ENCODE measurements at regions of chr10 and their contacts with region 1.

Region 1: DNA sequence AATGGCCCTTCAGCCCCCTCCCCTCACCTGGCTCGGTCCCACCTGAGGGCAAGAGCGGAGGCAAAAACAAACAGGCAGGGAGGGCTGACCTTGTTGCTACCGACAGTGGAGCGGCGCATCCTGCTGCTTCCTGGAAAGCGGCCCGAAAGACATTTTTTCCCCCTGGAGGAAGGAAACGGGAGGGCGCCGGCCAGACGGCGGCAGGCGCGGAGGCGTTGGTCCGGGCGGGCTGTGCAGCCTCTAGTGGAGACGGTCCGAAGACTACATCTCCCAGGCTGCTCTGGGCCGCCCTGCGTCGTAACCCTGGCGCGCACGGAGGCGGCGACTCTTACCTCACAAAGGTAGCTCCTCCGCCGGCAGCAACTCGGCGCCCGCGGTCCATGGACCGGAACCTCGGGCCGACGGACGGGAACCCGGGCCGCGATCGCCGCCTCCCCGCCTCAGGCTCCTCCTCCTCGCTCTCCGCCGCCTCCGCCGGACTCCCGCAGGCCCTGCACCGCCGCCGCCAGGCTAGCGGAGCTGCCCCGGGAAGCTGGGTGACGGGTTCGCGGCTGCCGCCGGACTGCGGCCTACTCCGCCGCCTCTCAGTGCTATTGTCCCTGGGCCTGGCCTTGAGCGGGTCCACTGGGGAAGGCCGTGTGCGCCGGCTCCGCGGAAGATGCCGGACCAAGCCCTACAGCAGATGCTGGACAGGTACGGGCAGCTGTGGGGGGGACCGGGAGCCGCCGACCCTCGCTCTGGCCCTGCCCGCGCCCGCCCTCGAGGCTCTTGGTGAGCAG is at the starts of genes CPEB3 and MARCHF5:
- DNase-seq: peak; percentile 96
- ATAC-seq: peak; percentile 97
- H3K4me3 ChIP-seq: peak within 1 kb of the TSS; percentile 57 to 99 (median 85)
- H3K4me3 Mint-ChIP-seq: peak within 1 kb of the TSS; percentile 95
- H3K27ac ChIP-seq: peak within 1 kb of the TSS; percentile 62 to 88
- H3K27ac Mint-ChIP-seq: peak within 1 kb of the TSS; percentile 91
- H3K4me1 ChIP-seq: peaks cover 9 to 20% of the 10 kb centered on the region in 2 donors
- H3K4me1 Mint-ChIP-seq: peaks cover 29% of the 10 kb centered on the region
- H3K27me3 ChIP-seq: no peaks in the 10 kb centered on the region
- H3K27me3 Mint-ChIP-seq: no peaks in the 10 kb centered on the region
- CTCF ChIP-seq: peak; percentile 68
- total RNA-seq, gene CPEB3: 5.0 and 6.7 TPM in 2 replicates
- total RNA-seq, gene MARCHF5: 25.9 and 27.8 TPM in 2 replicates

Region 2: GRCh38 chr10:91923371-91924211 is 367.4 kb before region 1 on chr10 and contains the start of gene BTAF1:
- CTCF ChIA-PET with region 1: interaction called, 3 read pairs
- POLR2A ChIA-PET with region 1: no interaction called
- intact Hi-C with region 1: loop called (anchors 1 kb)
- DNase-seq: peak; percentile 96
- ATAC-seq: peak; percentile 93
- H3K4me3 ChIP-seq: peak within 1 kb of the TSS; percentile 88 to 98 (median 93)
- H3K4me3 Mint-ChIP-seq: peak within 1 kb of the TSS; percentile 86
- H3K27ac ChIP-seq: peak within 1 kb of the TSS; percentile 93 to 99
- H3K27ac Mint-ChIP-seq: peak within 1 kb of the TSS; percentile 100
- H3K4me1 ChIP-seq: peaks cover 18 to 20% of the 10 kb centered on the region in 2 donors
- H3K4me1 Mint-ChIP-seq: peaks cover 39% of the 10 kb centered on the region
- H3K27me3 ChIP-seq: peaks cover 0 to 4% (median 2%) of the 10 kb centered on the region in 4 experiments
- H3K27me3 Mint-ChIP-seq: peaks cover 3% of the 10 kb centered on the region
- CTCF ChIP-seq: no peak
- total RNA-seq, gene BTAF1: 78.1 and 81.7 TPM in 2 replicates

Region 3: DNA sequence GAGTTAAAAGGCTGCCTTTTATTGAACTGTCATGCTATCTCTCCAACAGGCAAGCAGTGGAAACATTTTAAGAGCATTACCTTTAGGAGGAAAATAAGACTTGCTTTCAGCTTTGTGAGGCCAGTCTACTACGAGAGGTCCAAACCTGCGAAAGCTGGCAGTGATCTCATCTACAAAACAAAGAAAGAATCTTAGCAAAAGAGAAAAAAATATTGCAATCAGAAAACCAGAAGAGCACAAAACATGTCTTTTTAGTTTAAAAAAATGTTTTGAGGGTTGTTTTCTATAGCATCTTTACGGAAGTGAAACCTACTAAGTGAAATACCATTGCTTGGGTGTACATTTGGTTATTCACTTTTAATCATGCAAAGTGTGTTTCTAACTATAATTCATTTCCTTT is 148.1 kb before region 1 on chr10:
- CTCF ChIA-PET with region 1: interaction called, 7 read pairs
- POLR2A ChIA-PET with region 1: no interaction called
- intact Hi-C with region 1: loop called (anchors 1 kb)
- DNase-seq: peak; percentile 61
- ATAC-seq: peak; percentile 39
- H3K4me3 ChIP-seq: peak overlapping the region; percentile 6 to 51 (median 27)
- H3K4me3 Mint-ChIP-seq: peak overlapping the region; percentile 79
- H3K27ac ChIP-seq: peak overlapping the region; percentile 52 to 61
- H3K27ac Mint-ChIP-seq: peak overlapping the region; percentile 88
- H3K4me1 ChIP-seq: peaks cover 34 to 53% of the 10 kb centered on the region in 2 donors
- H3K4me1 Mint-ChIP-seq: peaks cover 59% of the 10 kb centered on the region
- H3K27me3 ChIP-seq: no peaks in the 10 kb centered on the region
- H3K27me3 Mint-ChIP-seq: no peaks in the 10 kb centered on the region
- CTCF ChIP-seq: no peak

Region 4: DNA sequence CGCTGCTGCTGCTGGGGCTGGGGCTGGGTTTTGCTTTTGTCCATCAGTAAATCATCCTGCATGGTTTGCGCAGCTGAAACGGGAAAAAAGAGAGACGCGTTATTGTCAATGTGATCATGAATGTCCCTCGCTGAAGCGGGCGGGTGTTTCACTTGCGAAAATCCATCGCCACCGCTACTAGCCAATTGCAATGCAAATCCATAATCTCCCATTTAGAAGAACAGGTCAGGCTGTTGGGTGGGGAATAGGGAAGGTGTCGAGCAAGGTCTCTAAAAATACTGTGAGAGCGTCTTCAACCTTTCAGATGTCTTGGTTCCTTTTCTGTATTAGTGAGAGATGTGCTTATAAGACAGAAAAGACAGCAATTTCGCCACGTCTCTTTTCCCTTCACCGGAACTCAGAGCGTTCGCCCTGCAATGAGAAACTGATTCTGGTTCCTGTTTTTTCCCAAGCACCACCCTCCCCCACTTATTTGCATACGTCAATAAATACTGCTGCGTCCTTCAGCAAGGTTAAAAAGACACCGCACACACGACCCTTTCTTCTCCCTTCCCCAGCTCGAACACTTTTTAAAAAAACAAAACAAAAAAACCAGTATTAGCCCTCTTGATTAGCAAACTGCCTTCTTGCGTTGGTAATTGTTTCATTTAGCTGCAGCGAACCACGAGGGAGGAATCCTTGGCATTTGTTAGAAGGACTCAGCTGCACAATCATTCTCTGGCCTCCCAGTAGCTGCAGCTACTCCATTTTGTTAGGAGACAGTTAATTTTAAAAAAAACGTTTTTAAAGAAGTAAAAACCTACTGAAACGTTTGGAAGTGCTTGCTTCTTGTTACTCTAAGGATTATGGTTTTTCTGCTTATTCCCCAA is 50.5 kb before region 1 on chr10:
- CTCF ChIA-PET with region 1: interaction called, 5 read pairs
- POLR2A ChIA-PET with region 1: interaction called, 4 read pairs
- intact Hi-C with region 1: loop called (anchors 1 kb)
- DNase-seq: peak; percentile 83
- ATAC-seq: peak; percentile 72
- H3K4me3 ChIP-seq: peak overlapping the region; percentile 63 to 99 (median 91)
- H3K4me3 Mint-ChIP-seq: peak overlapping the region; percentile 96
- H3K27ac ChIP-seq: peak overlapping the region; percentile 7 to 37
- H3K27ac Mint-ChIP-seq: peak overlapping the region; percentile 93
- H3K4me1 ChIP-seq: peaks cover 19 to 30% of the 10 kb centered on the region in 2 donors
- H3K4me1 Mint-ChIP-seq: peaks cover 47% of the 10 kb centered on the region
- H3K27me3 ChIP-seq: no peaks in the 10 kb centered on the region
- H3K27me3 Mint-ChIP-seq: no peaks in the 10 kb centered on the region
- CTCF ChIP-seq: no peak

Region 5: GRCh38 chr10:92327445-92328433 is 36.7 kb after region 1 on chr10:
- CTCF ChIA-PET with region 1: no interaction called
- POLR2A ChIA-PET with region 1: no interaction called
- intact Hi-C with region 1: no loop called
- DNase-seq: no peak
- ATAC-seq: no peak
- H3K4me3 ChIP-seq: no peak overlapping the region
- H3K4me3 Mint-ChIP-seq: no peak overlapping the region
- H3K27ac ChIP-seq: no peak overlapping the region
- H3K27ac Mint-ChIP-seq: no peak overlapping the region
- H3K4me1 ChIP-seq: no peaks in the 10 kb centered on the region
- H3K4me1 Mint-ChIP-seq: peaks cover 4% of the 10 kb centered on the region
- H3K27me3 ChIP-seq: no peaks in the 10 kb centered on the region
- H3K27me3 Mint-ChIP-seq: no peaks in the 10 kb centered on the region
- CTCF ChIP-seq: no peak

Region 6: GRCh38 chr10:93496322-93497041 is 1205.5 kb after region 1 on chr10 and contains the start of gene CEP55:
- CTCF ChIA-PET with region 1: no interaction called
- POLR2A ChIA-PET with region 1: no interaction called
- intact Hi-C with region 1: loop called (anchors 5 kb)
- DNase-seq: peak; percentile 94
- ATAC-seq: peak; percentile 99
- H3K4me3 ChIP-seq: peak within 1 kb of the TSS; percentile 67 to 97 (median 81)
- H3K4me3 Mint-ChIP-seq: peak within 1 kb of the TSS; percentile 93
- H3K27ac ChIP-seq: peak within 1 kb of the TSS in 1 of 2 donors; percentile 44
- H3K27ac Mint-ChIP-seq: peak within 1 kb of the TSS; percentile 67
- H3K4me1 ChIP-seq: peaks cover 8 to 16% of the 10 kb centered on the region in 2 donors
- H3K4me1 Mint-ChIP-seq: peaks cover 15% of the 10 kb centered on the region
- H3K27me3 ChIP-seq: peaks cover 0 to 4% (median 1%) of the 10 kb centered on the region in 4 experiments
- H3K27me3 Mint-ChIP-seq: peaks cover 8% of the 10 kb centered on the region
- CTCF ChIP-seq: no peak
- total RNA-seq, gene CEP55: 0.19 and 0.27 TPM in 2 replicates

Region 7: GRCh38 chr10:93672022-93672678 is 1381.1 kb after region 1 on chr10:
- CTCF ChIA-PET with region 1: no interaction called
- POLR2A ChIA-PET with region 1: no interaction called
- intact Hi-C with region 1: no loop called
- DNase-seq: no peak
- ATAC-seq: no peak
- H3K4me3 ChIP-seq: no peak overlapping the region
- H3K4me3 Mint-ChIP-seq: no peak overlapping the region
- H3K27ac ChIP-seq: no peak overlapping the region
- H3K27ac Mint-ChIP-seq: no peak overlapping the region
- H3K4me1 ChIP-seq: no peaks in the 10 kb centered on the region
- H3K4me1 Mint-ChIP-seq: no peaks in the 10 kb centered on the region
- H3K27me3 ChIP-seq: no peaks in the 10 kb centered on the region
- H3K27me3 Mint-ChIP-seq: no peaks in the 10 kb centered on the region
- CTCF ChIP-seq: no peak

Measured in B cell (primary cell).